ENCODE measurements at regions of chr16 and their contacts with region 1.

Region 1: DNA sequence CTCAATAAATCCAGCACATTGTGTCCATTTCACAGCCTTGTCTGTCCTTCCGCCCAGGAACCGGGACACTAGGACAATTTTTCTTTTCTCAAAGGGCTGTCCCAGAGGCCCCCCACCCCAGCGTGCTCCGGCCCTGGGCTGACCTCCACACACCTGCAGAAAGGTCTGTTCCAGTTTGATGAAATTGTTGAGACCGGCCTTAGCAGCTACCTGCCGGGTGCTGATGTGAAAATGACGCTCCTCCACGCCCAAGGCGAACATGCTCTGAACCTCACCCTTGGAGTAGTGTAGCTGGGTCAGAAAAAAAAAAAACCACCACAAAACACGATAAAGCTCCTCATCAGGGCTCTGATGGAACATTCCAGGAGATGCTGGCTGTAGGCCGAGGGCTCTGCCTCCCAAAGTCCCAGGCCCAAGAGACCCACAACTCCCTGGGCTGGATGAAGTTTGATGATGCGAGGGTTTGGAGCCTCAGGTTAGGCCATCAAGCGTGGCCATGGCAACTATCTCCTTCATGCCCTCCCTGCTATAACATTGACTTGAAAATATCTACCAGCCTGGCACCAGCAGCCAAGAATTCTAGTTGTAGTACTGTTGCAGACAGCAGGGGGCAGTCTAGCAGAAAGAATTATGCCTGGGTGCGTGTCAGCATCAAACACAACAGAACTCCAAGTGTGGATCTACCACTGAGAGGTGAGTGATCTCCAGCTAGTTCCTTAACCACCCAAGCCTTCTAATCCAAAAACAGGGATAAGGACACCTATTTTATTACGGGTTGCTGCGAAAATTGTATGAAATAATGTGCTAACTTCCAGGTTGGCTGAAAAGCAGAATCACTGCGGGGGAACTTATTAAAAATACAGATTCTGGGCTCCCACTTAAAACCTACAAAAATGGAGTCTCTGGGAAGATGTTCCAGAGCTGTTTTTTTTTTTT is 62.1 kb downstream of the RMI2 start:
- DNase-seq: peak; percentile 68
- ATAC-seq: peak; percentile 78
- H3K4me3 ChIP-seq: no peak overlapping the region
- H3K27ac ChIP-seq: no peak overlapping the region
- H3K4me1 ChIP-seq: peaks cover 0 to 10% of the 10 kb centered on the region in 2 experiments; a peak in 2 of 4 replicates
- H3K27me3 ChIP-seq: no peaks in the 10 kb centered on the region
- CTCF ChIP-seq: peak; percentile 76 to 93 (median 79)
- POLR2A ChIP-seq: no peak
- RAD21 ChIP-seq: peak; percentile 97

Region 2: DNA sequence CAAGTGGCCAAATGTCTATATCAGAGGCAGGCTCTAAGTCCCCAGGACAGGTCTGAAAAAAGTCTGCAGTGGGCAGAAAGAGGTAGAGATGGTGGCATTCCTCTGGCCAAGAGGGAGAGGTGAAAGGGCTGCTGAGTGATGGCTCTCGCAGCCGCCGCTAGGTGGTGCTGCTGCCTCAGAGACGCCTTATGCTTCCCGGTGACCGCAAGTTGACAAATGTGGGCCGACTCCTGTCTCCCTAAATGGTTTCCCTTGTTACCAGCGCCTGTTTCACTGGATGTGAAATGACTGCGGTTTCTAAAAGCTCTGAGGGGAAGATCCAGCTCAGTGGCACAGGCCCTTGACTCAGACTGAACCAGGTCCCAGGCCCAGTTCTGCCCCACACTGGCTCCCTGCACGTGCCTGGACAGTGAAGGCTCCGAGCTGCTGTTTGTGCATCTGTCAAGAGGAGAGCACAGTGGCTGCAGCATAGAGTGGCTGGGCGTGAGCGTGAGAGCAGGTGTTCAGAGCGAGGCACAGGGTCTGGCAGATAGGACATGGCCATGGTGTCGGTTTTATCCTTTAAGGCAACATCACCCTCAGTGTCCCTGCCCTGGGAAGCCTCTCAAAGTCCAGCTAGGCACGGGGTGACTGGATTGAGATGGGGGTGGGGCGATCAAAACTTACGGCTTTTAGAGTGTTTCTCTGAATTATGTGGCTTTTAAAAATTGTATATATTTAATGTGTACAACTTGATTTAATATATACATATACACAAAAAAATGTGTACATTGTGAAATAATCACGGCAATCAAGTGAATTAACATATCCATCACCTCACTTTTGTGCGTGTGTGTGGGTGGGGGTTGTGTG is 443.1 kb before region 1 on chr16:
- CTCF ChIA-PET with region 1: interaction called, 3 read pairs
- POLR2A ChIA-PET with region 1: no interaction called
- RAD21 ChIA-PET with region 1: no interaction called
- intact Hi-C with region 1: loop called (anchors 2 kb)
- DNase-seq: peak; percentile 32
- ATAC-seq: peak; percentile 96
- H3K4me3 ChIP-seq: no peak overlapping the region
- H3K27ac ChIP-seq: no peak overlapping the region
- H3K4me1 ChIP-seq: peaks cover 0 to 3% of the 10 kb centered on the region in 2 experiments; a peak in 1 of 4 replicates
- H3K27me3 ChIP-seq: no peaks in the 10 kb centered on the region
- CTCF ChIP-seq: peak; percentile 76 to 96 (median 96)
- POLR2A ChIP-seq: no peak
- RAD21 ChIP-seq: peak; percentile 92

Region 3: GRCh38 chr16:11497851-11498289 is 90.6 kb after region 1 on chr16:
- CTCF ChIA-PET with region 1: interaction called, 11 read pairs
- POLR2A ChIA-PET with region 1: no interaction called
- RAD21 ChIA-PET with region 1: interaction called in 1 of 2 experiments, 3 read pairs
- intact Hi-C with region 1: no loop called
- DNase-seq: peak; percentile 92
- ATAC-seq: peak; percentile 57
- H3K4me3 ChIP-seq: peak overlapping the region in 1 of 2 experiments; percentile 39; a peak in 1 of 4 replicates
- H3K27ac ChIP-seq: peak overlapping the region; percentile 87
- H3K4me1 ChIP-seq: peaks cover 46 to 68% of the 10 kb centered on the region in 2 experiments
- H3K27me3 ChIP-seq: no peaks in the 10 kb centered on the region
- CTCF ChIP-seq: no peak
- POLR2A ChIP-seq: peak; percentile 34
- RAD21 ChIP-seq: no peak

Region 4: DNA sequence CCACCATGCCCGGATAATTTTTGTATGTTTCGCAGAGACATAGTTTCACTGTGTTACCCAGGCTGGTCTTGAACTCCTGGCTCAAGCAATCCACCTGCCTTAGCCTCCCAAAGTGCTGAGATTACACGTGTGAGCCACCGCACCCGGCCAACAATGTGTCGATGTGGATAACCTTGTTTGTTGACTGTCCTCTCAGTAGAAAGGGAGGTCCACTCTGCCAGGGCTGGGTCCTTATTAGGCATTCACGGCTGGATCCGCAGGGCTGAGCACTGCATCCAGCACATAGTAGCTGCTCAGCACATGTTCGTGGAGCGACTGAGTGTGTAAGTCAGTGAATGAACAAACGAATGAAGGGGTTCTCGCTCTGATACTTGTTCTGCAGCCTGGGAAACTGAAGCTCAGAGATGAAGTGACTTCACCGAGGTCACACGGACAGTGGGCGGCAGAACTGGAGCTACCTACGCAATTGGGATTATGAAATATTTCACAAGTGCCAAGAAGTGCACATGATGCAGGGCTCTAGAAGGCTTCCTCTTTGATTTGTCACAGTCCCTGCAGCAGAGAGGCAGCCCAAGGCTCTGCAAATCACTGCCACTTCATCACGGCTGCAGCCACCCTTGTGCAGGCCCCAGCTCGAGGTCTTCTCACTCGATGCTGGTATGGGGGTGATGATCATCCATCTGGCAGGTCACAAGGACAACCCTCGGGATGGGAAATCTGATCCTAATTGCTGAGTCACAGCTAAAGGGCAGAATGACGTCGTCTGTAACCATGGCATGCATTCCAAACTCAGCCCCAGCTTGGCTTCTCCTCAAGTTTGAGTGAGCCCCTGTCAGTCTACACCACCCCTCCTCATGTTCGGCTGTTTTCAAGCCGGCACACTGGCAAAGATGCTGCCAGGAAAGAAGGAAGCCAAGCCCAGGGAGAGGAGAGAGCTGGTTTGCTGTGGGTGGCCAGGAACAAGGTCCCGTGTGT is 232.9 kb after region 1 on chr16:
- CTCF ChIA-PET with region 1: interaction called, 8 read pairs
- POLR2A ChIA-PET with region 1: interaction called, 3 read pairs
- RAD21 ChIA-PET with region 1: interaction called, 3 to 5 read pairs
- intact Hi-C with region 1: loop called (anchors 2 kb)
- DNase-seq: peak; percentile 63
- ATAC-seq: peak; percentile 57
- H3K4me3 ChIP-seq: no peak overlapping the region
- H3K27ac ChIP-seq: peak overlapping the region; percentile 58
- H3K4me1 ChIP-seq: peaks cover 20 to 31% of the 10 kb centered on the region in 2 experiments
- H3K27me3 ChIP-seq: no peaks in the 10 kb centered on the region
- CTCF ChIP-seq: no peak
- POLR2A ChIP-seq: no peak
- RAD21 ChIP-seq: peak; percentile 24; the same call in 1 of the 2 replicates

Region 5: GRCh38 chr16:11715246-11715947 is 308.1 kb after region 1 on chr16:
- CTCF ChIA-PET with region 1: interaction called, 13 read pairs
- POLR2A ChIA-PET with region 1: no interaction called
- RAD21 ChIA-PET with region 1: interaction called, 3 to 5 read pairs
- intact Hi-C with region 1: loop called (anchors 2 kb)
- DNase-seq: no peak
- ATAC-seq: no peak
- H3K4me3 ChIP-seq: no peak overlapping the region
- H3K27ac ChIP-seq: no peak overlapping the region
- H3K4me1 ChIP-seq: no peaks in the 10 kb centered on the region
- H3K27me3 ChIP-seq: no peaks in the 10 kb centered on the region
- CTCF ChIP-seq: no peak
- POLR2A ChIP-seq: no peak
- RAD21 ChIP-seq: no peak

Region 6: GRCh38 chr16:12067714-12068401 is 660.5 kb after region 1 on chr16:
- CTCF ChIA-PET with region 1: interaction called, 17 read pairs
- POLR2A ChIA-PET with region 1: no interaction called
- RAD21 ChIA-PET with region 1: interaction called in 1 of 2 experiments, 4 read pairs
- intact Hi-C with region 1: no loop called
- DNase-seq: peak; percentile 65
- ATAC-seq: peak; percentile 89
- H3K4me3 ChIP-seq: no peak overlapping the region
- H3K27ac ChIP-seq: no peak overlapping the region
- H3K4me1 ChIP-seq: peaks cover 2 to 3% of the 10 kb centered on the region in 2 experiments; a peak in 3 of 4 replicates
- H3K27me3 ChIP-seq: no peaks in the 10 kb centered on the region
- CTCF ChIP-seq: peak; percentile 90 to 92 (median 91)
- POLR2A ChIP-seq: no peak
- RAD21 ChIP-seq: peak; percentile 95